Activated B cell treated with CpG ODN at 0.5 μM for 24 hours (primary cell): ENCODE measurements at regions of chr4 and their contacts with region 1.

Region 1: GRCh38 chr4:48269861-48270522 is 354 bp upstream of the TEC start:
- DNase-seq: peak; percentile 88
- ATAC-seq: peak; percentile 90
- H3K4me3 Mint-ChIP-seq: peak overlapping the region; percentile 96
- H3K27ac Mint-ChIP-seq: peak overlapping the region; percentile 92
- H3K4me1 Mint-ChIP-seq: peaks cover 39% of the 10 kb centered on the region
- H3K27me3 Mint-ChIP-seq: no peaks in the 10 kb centered on the region
- CTCF ChIP-seq: no peak

Region 2: DNA sequence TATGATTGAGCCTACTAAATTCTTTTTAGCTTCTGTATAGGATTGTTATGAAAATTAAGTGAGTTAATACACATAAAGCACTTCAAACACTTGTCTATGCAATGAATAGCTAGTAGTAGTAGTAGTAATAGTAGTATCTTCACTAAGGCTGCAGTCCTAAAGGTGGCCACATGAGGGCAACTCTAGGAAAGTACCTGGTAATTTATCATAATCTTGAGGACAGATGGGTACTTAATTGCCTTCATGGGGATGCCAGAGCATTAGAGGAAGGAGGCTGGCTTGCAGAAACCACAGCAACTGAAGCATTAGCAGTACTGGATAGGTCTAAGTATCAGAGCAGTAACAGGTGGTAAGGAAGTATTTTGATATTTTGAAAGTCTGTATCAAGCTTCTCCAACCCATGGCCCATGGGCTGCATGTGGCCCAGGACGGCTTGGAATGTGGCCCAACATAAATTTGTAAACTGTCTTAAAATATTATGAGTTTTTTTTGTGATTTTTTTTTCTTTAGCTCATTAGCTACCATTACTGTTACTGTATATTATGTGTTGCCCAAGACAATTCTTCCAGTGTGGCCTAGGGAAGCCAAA is 236.1 kb before region 1 on chr4:
- CTCF ChIA-PET with region 1: no interaction called
- POLR2A ChIA-PET with region 1: interaction called, 3 read pairs
- intact Hi-C with region 1: loop called (anchors 1 kb)
- DNase-seq: no peak
- ATAC-seq: peak; percentile 69
- H3K4me3 Mint-ChIP-seq: no peak overlapping the region
- H3K27ac Mint-ChIP-seq: peak overlapping the region; percentile 36
- H3K4me1 Mint-ChIP-seq: peaks cover 46% of the 10 kb centered on the region
- H3K27me3 Mint-ChIP-seq: peaks cover 2% of the 10 kb centered on the region
- CTCF ChIP-seq: peak; percentile 23

Region 3: GRCh38 chr4:48212165-48212564 is 57.8 kb before region 1 on chr4:
- CTCF ChIA-PET with region 1: interaction called, 11 read pairs
- POLR2A ChIA-PET with region 1: interaction called, 3 read pairs
- intact Hi-C with region 1: loop called (anchors 1 kb)
- DNase-seq: no peak
- ATAC-seq: peak; percentile 73
- H3K4me3 Mint-ChIP-seq: peak overlapping the region; percentile 68
- H3K27ac Mint-ChIP-seq: peak overlapping the region; percentile 83
- H3K4me1 Mint-ChIP-seq: peaks cover 38% of the 10 kb centered on the region
- H3K27me3 Mint-ChIP-seq: no peaks in the 10 kb centered on the region
- CTCF ChIP-seq: no peak

Region 4: GRCh38 chr4:48222491-48222890 is 47.5 kb before region 1 on chr4:
- CTCF ChIA-PET with region 1: no interaction called
- POLR2A ChIA-PET with region 1: no interaction called
- intact Hi-C with region 1: no loop called
- DNase-seq: no peak
- ATAC-seq: no peak
- H3K4me3 Mint-ChIP-seq: no peak overlapping the region
- H3K27ac Mint-ChIP-seq: no peak overlapping the region
- H3K4me1 Mint-ChIP-seq: peaks cover 7% of the 10 kb centered on the region
- H3K27me3 Mint-ChIP-seq: no peaks in the 10 kb centered on the region
- CTCF ChIP-seq: no peak

Region 5: DNA sequence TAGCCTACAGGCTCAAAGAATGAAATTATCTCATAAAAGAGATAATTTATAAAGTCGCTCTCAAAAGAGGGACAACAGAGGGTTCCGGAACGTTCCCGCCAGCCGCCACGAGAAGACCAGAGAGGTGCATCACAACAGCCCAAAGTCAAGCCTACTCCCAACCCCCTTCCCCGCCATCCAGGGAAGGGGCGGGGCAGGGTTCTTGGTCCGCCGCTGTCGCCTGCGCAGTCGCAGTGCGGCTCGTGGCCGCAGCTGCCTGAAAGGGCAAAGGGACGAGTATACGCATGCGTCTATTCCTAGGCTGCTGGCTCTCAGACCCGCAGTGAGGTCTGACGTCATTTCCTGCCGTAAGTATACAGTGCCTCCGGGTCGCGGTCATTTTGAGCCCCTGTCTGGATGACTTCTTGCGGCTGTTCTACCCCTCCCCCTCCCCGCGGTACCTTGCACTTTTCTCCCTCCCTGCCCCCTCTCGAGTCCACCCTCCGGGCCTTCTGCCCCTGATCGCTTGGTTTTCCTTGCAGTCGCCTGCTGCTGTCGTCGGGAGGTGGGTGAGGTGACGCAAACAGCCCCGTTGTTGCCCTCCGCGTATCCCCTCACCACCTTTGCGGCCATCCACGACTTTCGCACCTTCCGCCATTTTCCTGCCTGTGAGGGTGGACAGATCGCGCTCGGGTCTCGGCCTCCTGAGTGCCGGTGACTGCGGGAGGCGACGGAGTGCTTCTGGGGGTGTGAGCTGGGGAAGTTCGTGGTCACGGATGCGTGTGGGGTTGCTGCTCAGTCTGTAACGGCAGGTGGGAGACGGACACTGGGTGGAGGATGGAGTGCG is 560.9 kb after region 1 on chr4 and contains the start of gene OCIAD1:
- CTCF ChIA-PET with region 1: no interaction called
- POLR2A ChIA-PET with region 1: no interaction called
- intact Hi-C with region 1: loop called (anchors 5 kb)
- DNase-seq: peak; percentile 82
- ATAC-seq: peak; percentile 94
- H3K4me3 Mint-ChIP-seq: peak within 1 kb of the TSS; percentile 100
- H3K27ac Mint-ChIP-seq: peak within 1 kb of the TSS; percentile 100
- H3K4me1 Mint-ChIP-seq: peaks cover 28% of the 10 kb centered on the region
- H3K27me3 Mint-ChIP-seq: no peaks in the 10 kb centered on the region
- CTCF ChIP-seq: no peak
- total RNA-seq, gene OCIAD1: 100 and 104 TPM in 2 replicates

Region 6: DNA sequence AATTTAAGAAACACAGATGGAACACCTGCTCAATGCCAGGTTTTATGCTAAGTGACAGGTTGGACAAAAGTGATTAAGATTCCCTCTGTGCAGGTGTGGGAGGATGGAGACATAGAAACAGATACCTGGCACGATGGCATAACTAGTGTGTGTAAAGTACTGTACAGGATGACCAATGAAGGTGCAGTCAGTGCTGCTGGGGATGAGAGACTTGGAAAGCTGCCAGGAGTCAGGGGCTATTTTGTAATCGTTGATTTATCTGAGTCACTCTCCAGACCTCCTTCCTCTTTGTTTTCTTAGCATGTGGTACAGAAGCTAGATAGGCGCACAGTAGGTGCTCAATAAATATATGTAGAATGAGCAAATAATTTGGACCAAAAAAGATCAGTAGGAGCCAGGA is 774.3 kb after region 1 on chr4:
- CTCF ChIA-PET with region 1: no interaction called
- POLR2A ChIA-PET with region 1: no interaction called
- intact Hi-C with region 1: no loop called
- DNase-seq: no peak
- ATAC-seq: no peak
- H3K4me3 Mint-ChIP-seq: no peak overlapping the region
- H3K27ac Mint-ChIP-seq: no peak overlapping the region
- H3K4me1 Mint-ChIP-seq: no peaks in the 10 kb centered on the region
- H3K27me3 Mint-ChIP-seq: no peaks in the 10 kb centered on the region
- CTCF ChIP-seq: no peak